ENCODE measurements at regions of chr14 and their contacts with region 1.

Region 1: GRCh38 chr14:53055003-53055402 is 98.1 kb downstream of the DDHD1 start:
- DNase-seq: no peak
- ATAC-seq: peak; percentile 51 to 81 (median 65)
- H3K4me3 ChIP-seq: no peak overlapping the region
- H3K27ac ChIP-seq: peak overlapping the region in 2 of 12 donors; percentile 8 to 9
- H3K4me1 ChIP-seq: peaks cover 0 to 7% (median 0%) of the 10 kb centered on the region in 12 donors
- H3K27me3 ChIP-seq: no peaks in the 10 kb centered on the region
- CTCF ChIP-seq: peak; percentile 63 to 88 (median 80)
- POLR2A ChIP-seq: no peak

Region 2: GRCh38 chr14:52824507-52824906 is 230.5 kb before region 1 on chr14:
- intact Hi-C with region 1: loop called (anchors 1 to 5 kb)
- DNase-seq: no peak
- ATAC-seq: no peak
- H3K4me3 ChIP-seq: no peak overlapping the region
- H3K27ac ChIP-seq: no peak overlapping the region
- H3K4me1 ChIP-seq: peaks cover 0 to 18% (median 0%) of the 10 kb centered on the region in 12 donors
- H3K27me3 ChIP-seq: no peaks in the 10 kb centered on the region
- CTCF ChIP-seq: no peak
- POLR2A ChIP-seq: no peak

Region 3: GRCh38 chr14:53126731-53127130 is 71.7 kb after region 1 on chr14:
- intact Hi-C with region 1: no loop called
- DNase-seq: no peak
- ATAC-seq: no peak
- H3K4me3 ChIP-seq: peak overlapping the region in 9 of 12 donors; percentile 15 to 42 (median 22)
- H3K27ac ChIP-seq: peak overlapping the region in 8 of 12 donors; percentile 4 to 67 (median 32)
- H3K4me1 ChIP-seq: peaks cover 0 to 27% (median 7%) of the 10 kb centered on the region in 12 donors
- H3K27me3 ChIP-seq: no peaks in the 10 kb centered on the region
- CTCF ChIP-seq: no peak
- POLR2A ChIP-seq: no peak